Activated CD4-positive, alpha-beta memory T cell treated with anti-CD3 and anti-CD28 coated beads for 36 hours (primary cell): ENCODE measurements at regions of chr15 and their contacts with region 1.

Region 1: DNA sequence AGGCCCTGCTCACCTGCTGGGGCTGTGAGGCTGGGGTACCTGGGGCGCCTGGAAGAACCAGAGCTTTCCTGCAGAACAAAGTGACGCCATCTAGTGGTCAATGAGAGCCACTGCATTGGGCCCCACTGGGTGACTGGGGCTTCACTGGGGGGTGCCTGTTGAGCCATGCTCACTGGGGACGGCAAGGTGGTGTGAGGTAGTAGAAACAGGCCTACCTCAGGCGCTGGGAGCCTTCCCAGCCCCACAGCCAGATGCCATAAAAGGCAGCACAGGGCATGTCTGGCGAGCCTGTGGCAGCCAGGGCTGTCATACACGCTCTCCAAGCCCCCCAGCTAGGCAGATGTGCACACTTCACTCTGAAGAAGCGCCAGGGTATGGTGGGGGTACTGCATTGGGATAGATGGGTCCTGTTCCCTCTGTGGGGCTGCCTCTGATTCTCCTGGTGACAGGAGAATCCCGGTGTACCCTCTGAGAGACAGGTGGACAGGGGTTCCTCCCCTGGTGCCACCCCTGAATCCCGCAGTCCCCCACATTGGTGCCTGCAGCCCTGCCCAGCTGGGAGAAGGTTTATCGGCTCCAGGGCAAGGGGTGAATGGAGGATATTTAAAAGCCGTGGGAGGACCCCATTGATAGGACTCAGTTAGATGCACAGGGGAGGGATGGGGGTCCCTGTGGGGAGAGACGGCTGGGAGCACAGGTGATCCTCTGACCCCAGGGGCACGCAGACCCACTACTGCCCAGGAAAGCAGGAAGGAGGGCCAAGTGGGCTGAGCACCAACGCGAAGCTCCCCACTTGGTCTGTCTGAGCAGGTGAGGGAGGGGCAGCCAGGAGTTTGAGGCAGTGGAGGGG is 178.8 kb downstream of the NSMCE3 start:
- DNase-seq: peak; percentile 60
- H3K4me3 Mint-ChIP-seq: peak overlapping the region; percentile 39
- H3K27ac Mint-ChIP-seq: no peak overlapping the region
- H3K4me1 Mint-ChIP-seq: peaks cover 8% of the 10 kb centered on the region
- H3K27me3 Mint-ChIP-seq: no peaks in the 10 kb centered on the region

Region 2: DNA sequence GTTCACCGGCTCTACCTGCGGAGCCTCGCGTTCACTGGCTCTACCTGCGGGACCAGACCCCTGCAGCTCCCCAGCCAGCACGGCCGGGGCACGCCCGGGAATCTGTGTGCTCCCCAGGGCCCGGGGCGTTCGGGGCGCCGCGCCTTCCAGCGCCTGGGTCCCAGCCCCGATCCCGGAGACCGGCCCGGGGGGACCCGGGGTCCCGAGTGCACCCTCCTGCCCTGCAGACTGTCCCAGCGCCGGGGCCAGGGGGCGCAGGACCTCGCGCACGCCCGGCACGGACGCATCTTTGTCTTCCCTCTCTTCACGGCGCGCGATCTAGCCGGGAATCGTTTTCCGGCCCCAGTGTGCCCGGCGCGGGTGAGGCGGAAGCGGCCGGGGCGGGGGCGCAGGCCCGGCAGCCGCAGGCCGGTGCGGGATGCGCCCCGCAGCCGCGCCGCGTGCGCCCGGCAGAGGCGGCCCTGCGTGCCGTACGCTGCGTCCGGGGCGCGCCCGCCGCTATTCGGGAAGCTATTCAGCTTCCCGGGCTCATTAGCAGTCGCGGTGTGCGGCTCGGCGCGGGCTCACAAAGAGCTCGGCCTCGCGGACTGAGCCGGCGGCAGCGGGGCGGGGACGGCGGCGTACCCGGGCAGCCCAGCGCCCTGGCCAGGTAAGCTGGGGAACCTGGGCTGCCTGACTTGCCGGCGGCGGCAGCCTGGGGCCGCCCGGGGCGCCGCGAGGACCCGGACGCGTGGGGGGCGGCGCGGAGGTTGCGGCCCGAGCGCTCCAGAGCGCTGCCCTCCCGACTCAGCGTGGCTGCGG is 205.0 kb before region 1 on chr15 and contains the start of gene APBA2:
- CTCF ChIA-PET with region 1: interaction called, 3 read pairs
- POLR2A ChIA-PET with region 1: no interaction called
- intact Hi-C with region 1: loop called (anchors 5 kb)
- DNase-seq: peak; percentile 50
- H3K4me3 Mint-ChIP-seq: peak within 1 kb of the TSS; percentile 70
- H3K27ac Mint-ChIP-seq: no peak within 1 kb of the TSS
- H3K4me1 Mint-ChIP-seq: peaks cover 35% of the 10 kb centered on the region
- H3K27me3 Mint-ChIP-seq: no peaks in the 10 kb centered on the region
- total RNA-seq, gene APBA2: 6.4 to 8.9 TPM

Region 3: GRCh38 chr15:28984421-28985315 is 106.2 kb before region 1 on chr15:
- CTCF ChIA-PET with region 1: interaction called, 6 read pairs
- POLR2A ChIA-PET with region 1: no interaction called
- intact Hi-C with region 1: loop called (anchors 5 kb)
- DNase-seq: no peak
- H3K4me3 Mint-ChIP-seq: no peak overlapping the region
- H3K27ac Mint-ChIP-seq: no peak overlapping the region
- H3K4me1 Mint-ChIP-seq: peaks cover 11% of the 10 kb centered on the region
- H3K27me3 Mint-ChIP-seq: no peaks in the 10 kb centered on the region

Region 4: GRCh38 chr15:28994831-28995596 is 95.8 kb before region 1 on chr15:
- CTCF ChIA-PET with region 1: interaction called, 7 read pairs
- POLR2A ChIA-PET with region 1: no interaction called
- intact Hi-C with region 1: loop called (anchors 5 kb)
- DNase-seq: no peak
- H3K4me3 Mint-ChIP-seq: no peak overlapping the region
- H3K27ac Mint-ChIP-seq: no peak overlapping the region
- H3K4me1 Mint-ChIP-seq: peaks cover 5% of the 10 kb centered on the region
- H3K27me3 Mint-ChIP-seq: no peaks in the 10 kb centered on the region

Region 5: DNA sequence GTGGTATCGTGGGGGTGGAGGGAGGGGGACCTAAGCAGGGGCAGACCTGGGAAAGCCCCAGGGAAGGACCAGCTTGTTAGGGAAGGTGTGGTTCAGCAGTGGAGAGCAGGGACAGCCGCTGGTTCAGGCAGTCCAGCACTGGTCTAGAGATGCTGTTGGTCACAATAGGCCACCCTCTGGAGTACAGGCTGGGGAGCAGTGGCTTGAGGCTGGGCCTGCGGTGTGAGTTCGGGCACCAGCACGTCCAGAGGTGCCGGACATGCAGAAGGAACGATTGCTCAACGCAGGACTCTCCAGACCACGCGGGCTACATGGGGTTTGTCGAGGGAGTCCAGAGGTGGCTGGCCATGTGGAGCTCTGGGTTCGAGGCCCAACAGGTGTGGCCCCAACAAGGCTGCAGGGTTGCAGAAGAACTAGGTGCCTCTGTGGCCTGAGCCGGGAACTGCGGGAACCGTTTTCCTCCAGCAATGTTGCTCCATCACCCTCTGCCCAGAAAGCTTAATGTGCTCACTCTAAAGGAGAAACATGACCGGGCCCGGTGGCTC is 61.1 kb before region 1 on chr15:
- CTCF ChIA-PET with region 1: no interaction called
- POLR2A ChIA-PET with region 1: no interaction called
- intact Hi-C with region 1: no loop called
- DNase-seq: no peak
- H3K4me3 Mint-ChIP-seq: no peak overlapping the region
- H3K27ac Mint-ChIP-seq: no peak overlapping the region
- H3K4me1 Mint-ChIP-seq: peaks cover 13% of the 10 kb centered on the region
- H3K27me3 Mint-ChIP-seq: no peaks in the 10 kb centered on the region

Region 6: DNA sequence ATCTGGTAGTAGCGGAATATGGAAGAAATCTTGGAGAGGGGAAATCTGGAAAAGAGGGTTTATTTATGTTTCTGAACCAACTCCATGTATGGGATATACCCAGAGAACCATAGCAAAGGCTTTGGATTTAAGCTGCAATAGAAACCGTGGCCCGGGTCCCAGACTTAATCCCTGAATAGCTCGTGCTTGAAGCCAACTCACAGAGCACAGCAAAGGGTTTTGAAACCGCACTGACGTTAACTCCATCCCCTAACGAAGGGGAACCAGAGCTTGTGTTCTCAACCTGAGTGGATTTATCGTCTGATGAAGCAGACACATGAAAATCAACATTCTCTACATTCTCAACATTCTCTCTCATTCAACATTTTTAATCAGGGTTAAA is 50.5 kb before region 1 on chr15:
- CTCF ChIA-PET with region 1: interaction called, 10 read pairs
- POLR2A ChIA-PET with region 1: no interaction called
- intact Hi-C with region 1: no loop called
- DNase-seq: no peak
- H3K4me3 Mint-ChIP-seq: no peak overlapping the region
- H3K27ac Mint-ChIP-seq: no peak overlapping the region
- H3K4me1 Mint-ChIP-seq: peaks cover 30% of the 10 kb centered on the region
- H3K27me3 Mint-ChIP-seq: no peaks in the 10 kb centered on the region

Region 7: DNA sequence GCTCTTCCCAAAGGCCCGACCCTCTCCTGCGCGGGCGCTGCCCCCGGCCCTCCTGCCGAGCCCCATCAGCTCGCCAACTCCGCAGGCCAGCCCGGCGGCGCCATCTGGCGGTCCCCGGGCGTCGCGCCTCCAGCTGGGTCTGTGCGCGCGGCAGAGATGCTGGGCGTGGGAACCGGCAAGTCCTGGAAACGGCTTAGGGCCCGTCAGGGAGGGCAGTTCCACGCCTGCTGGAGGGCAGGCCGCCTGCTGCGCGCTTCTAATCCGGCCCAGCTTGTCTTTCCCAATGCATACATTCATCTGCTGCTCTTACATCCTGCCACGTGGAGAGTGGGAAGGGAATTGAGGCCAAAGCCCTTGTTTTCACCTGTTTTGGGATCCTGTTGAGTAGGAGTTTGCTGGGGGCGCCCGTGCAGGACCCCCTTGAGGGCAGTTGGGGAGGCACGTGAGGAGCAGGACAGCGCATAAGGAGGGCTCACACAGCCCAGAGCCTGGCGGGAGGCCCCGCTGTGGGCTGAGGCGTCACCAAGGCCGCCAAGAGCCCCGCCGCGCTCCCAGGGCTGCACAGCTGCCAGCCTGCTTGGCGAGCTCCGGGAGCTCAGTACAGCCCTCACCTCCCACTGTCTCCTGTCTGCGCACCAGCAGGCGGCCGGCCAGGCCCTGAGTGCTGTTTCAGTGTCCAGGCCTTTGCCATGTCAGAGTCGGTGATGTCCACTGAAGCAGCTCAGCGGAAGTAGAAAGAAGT is 13.2 kb after region 1 on chr15:
- CTCF ChIA-PET with region 1: interaction called, 66 read pairs
- POLR2A ChIA-PET with region 1: interaction called, 5 read pairs
- intact Hi-C with region 1: no loop called
- DNase-seq: peak; percentile 70
- H3K4me3 Mint-ChIP-seq: no peak overlapping the region
- H3K27ac Mint-ChIP-seq: no peak overlapping the region
- H3K4me1 Mint-ChIP-seq: no peaks in the 10 kb centered on the region
- H3K27me3 Mint-ChIP-seq: no peaks in the 10 kb centered on the region

Region 8: DNA sequence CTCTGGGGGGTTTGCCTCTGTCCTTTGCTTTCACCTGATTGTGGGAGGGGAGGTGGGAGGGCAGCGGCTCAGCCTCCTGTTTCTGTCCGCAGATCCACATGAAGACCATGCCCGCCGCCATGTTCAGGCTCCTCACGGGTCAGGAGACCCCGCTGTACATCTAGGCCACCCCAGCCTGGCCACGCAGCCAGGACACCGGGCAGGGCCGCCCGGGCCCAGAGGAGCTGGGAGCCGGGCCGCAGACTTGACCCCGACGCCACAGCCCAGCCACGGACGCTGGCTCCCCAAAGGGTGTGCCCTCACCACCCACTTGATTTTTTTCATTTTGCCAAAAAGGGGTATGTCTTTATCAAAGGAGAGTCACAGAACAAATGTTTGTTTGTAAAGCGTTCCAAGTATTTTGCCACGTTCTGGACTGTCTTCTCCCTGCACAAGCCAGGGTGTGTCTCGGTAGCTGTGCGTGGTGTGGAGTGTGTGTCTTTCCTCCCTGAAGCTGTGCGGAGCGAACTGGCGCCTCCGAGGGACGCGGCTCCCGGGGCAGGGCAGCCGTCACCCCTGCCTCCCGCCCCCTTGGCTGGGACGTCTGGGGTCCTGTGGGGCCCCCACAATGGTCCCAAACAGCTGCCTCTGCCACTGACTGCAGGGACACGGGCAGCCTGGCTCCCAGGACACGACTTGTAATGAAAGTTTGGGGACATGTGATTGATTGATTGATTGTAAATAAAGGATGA is 26.3 kb after region 1 on chr15:
- CTCF ChIA-PET with region 1: no interaction called
- POLR2A ChIA-PET with region 1: no interaction called
- intact Hi-C with region 1: no loop called
- DNase-seq: no peak
- H3K4me3 Mint-ChIP-seq: no peak overlapping the region
- H3K27ac Mint-ChIP-seq: no peak overlapping the region
- H3K4me1 Mint-ChIP-seq: peaks cover 10% of the 10 kb centered on the region
- H3K27me3 Mint-ChIP-seq: peaks cover 3% of the 10 kb centered on the region

Region 9: DNA sequence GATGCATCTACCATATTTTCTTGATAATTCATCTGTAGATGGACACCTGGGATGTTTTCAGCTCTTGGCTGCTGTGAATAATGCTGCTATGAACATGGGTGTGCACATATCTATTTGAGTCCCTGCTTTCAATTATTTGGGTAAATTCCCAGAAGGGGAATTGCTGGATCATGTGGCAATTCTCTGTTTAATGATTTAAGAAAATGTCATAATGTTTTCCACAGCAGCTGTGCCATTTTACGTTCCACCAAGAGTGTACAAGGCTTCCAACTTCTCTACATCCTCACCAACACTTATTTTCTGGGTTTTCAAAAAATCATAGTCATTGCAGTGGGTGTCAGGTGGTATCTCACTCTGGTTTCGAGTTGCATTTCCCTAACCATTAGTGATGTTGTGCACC is 114.3 kb after region 1 on chr15:
- CTCF ChIA-PET with region 1: no interaction called
- POLR2A ChIA-PET with region 1: no interaction called
- intact Hi-C with region 1: no loop called
- DNase-seq: no peak
- H3K4me3 Mint-ChIP-seq: no peak overlapping the region
- H3K27ac Mint-ChIP-seq: no peak overlapping the region
- H3K4me1 Mint-ChIP-seq: no peaks in the 10 kb centered on the region
- H3K27me3 Mint-ChIP-seq: peaks cover 21% of the 10 kb centered on the region